Tibial artery (tissue), 4 donors: ENCODE measurements at regions of chr2 and their contacts with region 1.

Region 1: GRCh38 chr2:137910641-137911040 is 53.6 kb upstream of the HNMT start:
- DNase-seq: no peak
- H3K4me3 ChIP-seq: no peak overlapping the region
- H3K27ac ChIP-seq: no peak overlapping the region
- H3K4me1 ChIP-seq: no peaks in the 10 kb centered on the region
- H3K27me3 ChIP-seq: no peaks in the 10 kb centered on the region
- CTCF ChIP-seq: peak; percentile 62 to 70

Region 2: DNA sequence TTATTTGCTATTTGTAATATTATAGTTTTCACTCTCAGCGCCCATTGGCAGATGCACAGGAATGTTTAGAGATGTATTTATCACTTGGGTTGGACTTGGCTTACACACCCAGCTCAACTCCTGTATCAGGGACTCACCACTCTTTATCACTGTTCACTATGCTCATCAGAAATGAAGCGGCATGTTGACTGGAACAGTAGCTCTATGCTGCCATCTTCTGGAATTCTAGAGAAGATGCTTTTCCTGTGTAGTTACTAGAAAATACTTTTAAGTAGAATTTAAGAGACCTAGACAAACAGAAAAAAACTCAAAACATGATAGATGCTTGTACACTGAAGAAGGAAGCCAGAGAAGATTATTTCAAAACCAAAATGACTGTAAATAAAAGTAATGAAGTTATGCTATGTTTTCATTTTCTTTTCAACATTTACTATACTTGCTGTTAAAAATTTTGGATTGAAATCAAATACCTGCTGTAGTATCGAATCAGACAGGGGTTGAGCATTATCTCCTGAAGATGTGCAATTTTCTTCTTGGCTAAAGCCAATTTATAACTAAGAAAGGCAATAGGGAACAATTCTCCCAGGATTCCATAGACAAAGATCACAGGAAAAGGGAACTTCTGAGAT is 916.9 kb after region 1 on chr2:
- intact Hi-C with region 1: loop called (anchors 5 kb)
- DNase-seq: no peak
- H3K4me3 ChIP-seq: no peak overlapping the region
- H3K27ac ChIP-seq: no peak overlapping the region
- H3K4me1 ChIP-seq: no peaks in the 10 kb centered on the region
- H3K27me3 ChIP-seq: peaks cover 0 to 2% of the 10 kb centered on the region in 2 donors
- CTCF ChIP-seq: peak; percentile 69 to 78